MCF 10A (cell line): ENCODE measurements at regions of chr4 and their contacts with region 1.

Region 1: GRCh38 chr4:81069706-81070331 is 39.3 kb downstream of the BMP3 start:
- DNase-seq: peak; percentile 91
- H3K4me3 Mint-ChIP-seq: no peak overlapping the region
- H3K27ac Mint-ChIP-seq: no peak overlapping the region
- H3K4me1 Mint-ChIP-seq: peaks cover 11% of the 10 kb centered on the region
- H3K27me3 Mint-ChIP-seq: no peaks in the 10 kb centered on the region
- CTCF ChIP-seq: peak; percentile 78

Region 2: DNA sequence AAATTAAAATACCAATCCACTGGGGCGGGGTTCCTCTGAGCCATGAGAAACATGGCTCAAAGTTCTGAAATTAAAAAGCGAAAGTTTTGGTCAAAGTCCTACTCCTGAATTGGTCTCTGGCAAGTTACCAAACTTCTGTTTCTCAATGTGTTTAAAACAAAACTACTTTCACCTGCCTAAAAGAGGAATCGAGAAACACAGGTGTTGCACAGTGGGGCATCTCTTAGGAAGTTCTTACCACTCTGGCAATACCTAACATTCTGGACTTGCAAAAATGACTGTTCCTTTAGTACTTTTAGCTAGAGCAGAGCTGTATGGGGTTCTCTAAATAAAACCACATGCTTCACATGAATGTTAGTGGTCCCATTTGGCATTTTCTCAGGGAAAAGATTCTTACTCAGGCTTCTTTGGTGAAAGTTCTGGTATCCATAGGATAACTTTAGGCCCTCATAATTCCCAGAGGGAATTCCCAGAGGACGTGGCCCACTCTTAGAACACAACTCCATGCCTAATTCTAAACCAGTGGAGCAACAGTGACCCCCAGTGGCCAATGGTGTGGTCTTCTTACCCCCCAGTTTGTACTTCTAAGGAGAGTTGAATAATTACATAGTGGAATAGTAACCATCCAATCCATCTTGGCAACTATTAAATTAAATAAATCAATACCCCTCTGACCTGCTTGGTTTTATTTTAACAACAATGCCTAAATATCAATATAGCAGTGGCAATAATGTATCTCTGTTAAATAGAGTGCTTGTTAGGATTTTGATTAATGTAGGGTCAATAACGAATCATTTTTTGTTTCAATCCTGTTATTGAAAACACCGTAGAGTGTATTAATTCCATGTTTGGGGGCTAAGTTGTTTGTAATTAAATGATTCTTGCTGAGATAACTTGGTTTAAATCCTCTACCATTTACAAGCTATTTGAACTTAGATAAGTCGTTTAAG is 17.4 kb before region 1 on chr4:
- CTCF ChIA-PET with region 1: interaction called, 13 read pairs
- POLR2A ChIA-PET with region 1: no interaction called
- intact Hi-C with region 1: no loop called
- DNase-seq: peak; percentile 79
- H3K4me3 Mint-ChIP-seq: no peak overlapping the region
- H3K27ac Mint-ChIP-seq: no peak overlapping the region
- H3K4me1 Mint-ChIP-seq: no peaks in the 10 kb centered on the region
- H3K27me3 Mint-ChIP-seq: no peaks in the 10 kb centered on the region
- CTCF ChIP-seq: peak; percentile 59

Region 3: GRCh38 chr4:81084029-81084428 is 14.2 kb after region 1 on chr4:
- CTCF ChIA-PET with region 1: interaction called, 29 read pairs
- POLR2A ChIA-PET with region 1: no interaction called
- intact Hi-C with region 1: no loop called
- DNase-seq: peak; percentile 59
- H3K4me3 Mint-ChIP-seq: no peak overlapping the region
- H3K27ac Mint-ChIP-seq: no peak overlapping the region
- H3K4me1 Mint-ChIP-seq: peaks cover 10% of the 10 kb centered on the region
- H3K27me3 Mint-ChIP-seq: no peaks in the 10 kb centered on the region
- CTCF ChIP-seq: peak; percentile 47

Region 4: GRCh38 chr4:81260443-81261101 is 190.8 kb after region 1 on chr4:
- CTCF ChIA-PET with region 1: interaction called, 14 read pairs
- POLR2A ChIA-PET with region 1: no interaction called
- intact Hi-C with region 1: loop called (anchors 1 kb)
- DNase-seq: peak; percentile 24
- H3K4me3 Mint-ChIP-seq: no peak overlapping the region
- H3K27ac Mint-ChIP-seq: no peak overlapping the region
- H3K4me1 Mint-ChIP-seq: peaks cover 12% of the 10 kb centered on the region
- H3K27me3 Mint-ChIP-seq: no peaks in the 10 kb centered on the region
- CTCF ChIP-seq: peak; percentile 39

Region 5: GRCh38 chr4:81346719-81347118 is 276.9 kb after region 1 on chr4:
- CTCF ChIA-PET with region 1: interaction called, 192 read pairs
- POLR2A ChIA-PET with region 1: interaction called, 9 read pairs
- intact Hi-C with region 1: loop called (anchors 1 kb)
- DNase-seq: no peak
- H3K4me3 Mint-ChIP-seq: no peak overlapping the region
- H3K27ac Mint-ChIP-seq: no peak overlapping the region
- H3K4me1 Mint-ChIP-seq: no peaks in the 10 kb centered on the region
- H3K27me3 Mint-ChIP-seq: no peaks in the 10 kb centered on the region
- CTCF ChIP-seq: no peak

Region 6: DNA sequence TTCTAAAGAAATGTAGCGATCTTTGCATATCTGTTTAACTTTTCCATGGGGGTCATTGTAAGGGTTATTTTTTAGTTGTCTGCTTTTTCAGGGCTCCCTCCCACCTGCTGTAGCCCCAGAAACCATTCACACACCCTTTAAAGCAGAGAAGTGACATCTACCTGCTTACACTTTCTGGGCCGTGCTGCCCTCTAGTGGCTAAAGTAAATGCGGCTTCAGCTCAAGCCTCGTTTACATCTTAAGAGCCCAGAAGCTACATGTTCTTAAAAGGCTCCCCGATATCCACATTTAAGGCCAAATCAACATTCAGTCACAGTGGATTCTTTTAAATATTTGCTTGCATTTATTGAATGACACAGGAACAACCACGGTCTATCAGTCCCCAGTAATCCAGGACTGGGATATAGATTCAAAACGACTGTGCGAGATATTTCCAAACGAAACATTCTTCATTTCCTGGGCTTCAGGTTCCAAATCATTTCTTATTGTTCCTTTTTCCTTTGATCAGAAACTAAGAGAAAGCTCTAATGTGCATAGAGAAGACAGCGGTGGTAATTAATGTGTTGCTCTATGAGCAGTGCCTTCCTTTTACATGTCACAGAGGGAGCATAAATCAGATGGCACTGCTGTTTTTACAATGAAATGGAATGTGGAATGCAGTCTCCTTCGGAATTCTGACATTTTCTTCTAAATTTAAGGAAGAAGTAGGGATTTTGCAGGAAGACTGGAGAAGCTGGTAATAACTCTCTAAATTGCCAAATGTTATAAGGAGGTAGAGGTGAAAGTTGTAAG is 282.0 kb after region 1 on chr4:
- CTCF ChIA-PET with region 1: interaction called, 192 read pairs
- POLR2A ChIA-PET with region 1: interaction called, 9 read pairs
- intact Hi-C with region 1: loop called (anchors 1 kb)
- DNase-seq: peak; percentile 81
- H3K4me3 Mint-ChIP-seq: no peak overlapping the region
- H3K27ac Mint-ChIP-seq: no peak overlapping the region
- H3K4me1 Mint-ChIP-seq: no peaks in the 10 kb centered on the region
- H3K27me3 Mint-ChIP-seq: no peaks in the 10 kb centered on the region
- CTCF ChIP-seq: peak; percentile 74

Region 7: GRCh38 chr4:81369886-81370285 is 300.1 kb after region 1 on chr4:
- CTCF ChIA-PET with region 1: interaction called, 11 read pairs
- POLR2A ChIA-PET with region 1: no interaction called
- intact Hi-C with region 1: no loop called
- DNase-seq: no peak
- H3K4me3 Mint-ChIP-seq: no peak overlapping the region
- H3K27ac Mint-ChIP-seq: no peak overlapping the region
- H3K4me1 Mint-ChIP-seq: no peaks in the 10 kb centered on the region
- H3K27me3 Mint-ChIP-seq: no peaks in the 10 kb centered on the region
- CTCF ChIP-seq: no peak